HEK293T (cell line): ENCODE measurements at regions of chr11 and their contacts with region 1.

Region 1: GRCh38 chr11:30322826-30323710 is at the start of gene ARL14EP:
- DNase-seq: peak; percentile 89

Region 2: GRCh38 chr11:30091728-30092127 is 231.3 kb before region 1 on chr11:
- CTCF ChIA-PET with region 1: no interaction called
- POLR2A ChIA-PET with region 1: no interaction called
- DNase-seq: no peak

Region 3: DNA sequence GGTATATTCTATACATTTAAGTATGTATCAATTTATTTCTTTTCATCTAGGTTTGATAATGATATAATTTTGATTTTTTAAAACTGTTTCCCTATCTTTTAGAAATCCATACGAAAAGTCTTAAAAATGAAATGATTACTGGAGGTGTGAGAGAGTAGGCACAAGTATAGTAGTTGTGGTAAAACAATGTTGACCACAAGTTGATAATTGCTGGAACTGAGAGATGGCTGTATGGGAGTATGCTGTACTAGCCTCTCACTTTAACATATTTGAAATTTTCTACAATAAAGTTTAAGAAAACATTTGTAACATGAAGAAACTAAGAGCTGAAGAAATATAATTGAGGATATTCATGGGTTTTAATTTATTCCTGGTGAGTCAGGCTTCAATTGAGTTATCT is 62.3 kb before region 1 on chr11:
- CTCF ChIA-PET with region 1: no interaction called
- POLR2A ChIA-PET with region 1: no interaction called
- DNase-seq: no peak

Region 4: GRCh38 chr11:30310623-30311022 is 12.4 kb before region 1 on chr11:
- CTCF ChIA-PET with region 1: no interaction called
- POLR2A ChIA-PET with region 1: interaction called, 14 read pairs
- DNase-seq: no peak

Region 5: DNA sequence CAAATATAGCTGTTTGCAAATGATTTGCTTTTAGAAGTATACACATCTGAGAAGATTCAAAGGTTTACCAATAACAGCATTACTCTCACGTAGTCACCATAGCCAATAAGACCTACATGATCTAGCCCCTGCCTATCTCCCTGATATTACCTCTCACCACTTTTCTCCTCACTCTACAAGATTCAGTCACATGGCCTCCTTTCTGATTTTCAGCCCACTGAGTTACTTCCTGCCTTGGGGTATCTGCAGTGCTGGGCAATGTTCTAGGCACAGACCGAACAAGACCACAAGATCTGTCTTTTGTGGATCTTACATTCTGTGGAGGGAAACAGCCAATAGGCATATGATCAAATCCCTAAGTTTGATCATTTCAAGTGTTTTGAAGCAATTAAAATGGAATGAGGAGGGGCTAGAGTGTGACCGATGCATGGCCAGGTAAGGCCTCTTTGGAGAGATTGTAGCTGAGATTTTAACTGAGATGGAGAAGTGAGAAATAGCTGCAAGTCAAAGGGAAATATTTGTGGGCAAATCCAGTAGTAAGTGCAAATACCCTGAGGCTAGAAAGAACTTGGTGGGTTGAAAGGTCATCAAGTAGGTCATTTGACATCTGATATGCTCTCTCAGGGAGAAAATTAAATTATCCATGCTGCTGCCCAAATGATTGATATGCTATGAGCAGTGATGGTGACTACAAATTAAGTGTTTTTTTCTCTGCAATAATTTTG is 42.9 kb after region 1 on chr11:
- CTCF ChIA-PET with region 1: no interaction called
- POLR2A ChIA-PET with region 1: no interaction called
- DNase-seq: no peak

Region 6: DNA sequence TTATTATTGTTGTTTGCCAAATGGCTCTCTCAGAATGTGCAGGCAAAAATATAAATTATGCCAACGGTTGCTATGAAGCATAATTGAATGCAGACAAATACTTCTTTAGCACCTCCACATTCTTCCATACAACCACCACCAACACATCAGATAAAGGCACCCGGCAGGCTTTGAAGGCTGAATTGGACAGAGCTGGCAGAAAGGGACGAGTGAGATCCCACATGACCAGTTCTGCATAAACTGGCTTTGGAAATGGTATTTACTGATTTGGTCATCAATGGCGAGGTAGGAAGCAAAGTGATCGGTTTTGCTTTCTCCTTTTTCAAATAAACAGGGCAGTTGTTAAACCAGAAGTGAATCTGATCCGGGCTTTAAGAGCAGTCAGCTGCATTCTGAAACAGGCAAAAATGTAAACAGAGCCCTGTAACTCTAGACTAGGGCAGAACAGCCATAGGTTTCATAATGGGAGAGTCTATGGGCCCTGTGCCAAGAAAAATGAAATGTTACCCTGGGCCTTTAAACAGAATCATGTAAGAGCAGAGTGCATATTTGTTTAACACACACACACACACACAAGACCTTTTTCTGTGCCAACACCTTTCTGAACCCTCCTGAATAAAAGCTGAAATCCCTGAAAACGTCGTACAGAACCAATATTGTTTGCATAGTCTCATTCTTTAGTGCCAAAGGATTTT is 165.4 kb after region 1 on chr11:
- CTCF ChIA-PET with region 1: no interaction called
- POLR2A ChIA-PET with region 1: no interaction called
- DNase-seq: peak; percentile 65